ENCODE measurements at regions of chr11 and their contacts with region 1.

Region 1: DNA sequence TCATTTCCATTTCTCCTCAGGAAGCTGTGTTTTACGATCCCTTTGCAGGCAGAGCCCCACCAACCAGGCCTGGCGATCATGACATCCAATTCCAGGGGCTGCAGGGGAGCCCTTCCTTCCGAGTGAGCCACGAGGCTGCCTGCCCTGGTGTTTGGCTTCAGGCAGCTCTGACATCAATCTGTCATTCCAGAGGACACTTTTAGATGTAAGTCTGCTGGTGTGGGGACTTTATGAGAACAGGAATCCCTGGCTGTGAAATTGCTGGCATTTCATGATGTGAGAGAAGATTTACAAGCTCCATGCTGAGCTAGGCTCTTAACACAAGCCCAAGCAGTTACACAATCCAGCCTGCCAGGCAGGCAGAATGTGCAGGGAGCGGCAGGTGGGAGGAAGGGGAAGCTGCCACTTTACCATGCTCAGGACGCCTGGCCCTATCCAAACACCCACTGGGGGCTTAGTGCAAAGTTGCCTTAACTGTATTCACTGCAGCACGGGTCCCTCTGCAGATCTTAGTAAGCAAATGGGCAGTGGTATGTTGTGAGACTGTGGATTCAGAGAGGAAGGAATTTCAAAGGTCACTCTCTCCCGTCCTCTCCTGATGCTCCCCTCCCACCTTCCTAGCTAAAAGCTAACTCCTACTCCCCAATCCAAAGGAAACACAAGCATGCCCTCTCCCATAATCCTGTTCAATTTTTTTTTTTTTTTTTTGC is 43.4 kb upstream of the MICAL2 start:
- DNase-seq: peak; percentile 75
- H3K4me3 ChIP-seq: peak overlapping the region; percentile 1; the same call in 1 of the 2 replicates
- H3K27ac ChIP-seq: peak overlapping the region; percentile 97
- H3K4me1 ChIP-seq: peaks cover 28% of the 10 kb centered on the region
- H3K27me3 ChIP-seq: no peaks in the 10 kb centered on the region

Region 2: DNA sequence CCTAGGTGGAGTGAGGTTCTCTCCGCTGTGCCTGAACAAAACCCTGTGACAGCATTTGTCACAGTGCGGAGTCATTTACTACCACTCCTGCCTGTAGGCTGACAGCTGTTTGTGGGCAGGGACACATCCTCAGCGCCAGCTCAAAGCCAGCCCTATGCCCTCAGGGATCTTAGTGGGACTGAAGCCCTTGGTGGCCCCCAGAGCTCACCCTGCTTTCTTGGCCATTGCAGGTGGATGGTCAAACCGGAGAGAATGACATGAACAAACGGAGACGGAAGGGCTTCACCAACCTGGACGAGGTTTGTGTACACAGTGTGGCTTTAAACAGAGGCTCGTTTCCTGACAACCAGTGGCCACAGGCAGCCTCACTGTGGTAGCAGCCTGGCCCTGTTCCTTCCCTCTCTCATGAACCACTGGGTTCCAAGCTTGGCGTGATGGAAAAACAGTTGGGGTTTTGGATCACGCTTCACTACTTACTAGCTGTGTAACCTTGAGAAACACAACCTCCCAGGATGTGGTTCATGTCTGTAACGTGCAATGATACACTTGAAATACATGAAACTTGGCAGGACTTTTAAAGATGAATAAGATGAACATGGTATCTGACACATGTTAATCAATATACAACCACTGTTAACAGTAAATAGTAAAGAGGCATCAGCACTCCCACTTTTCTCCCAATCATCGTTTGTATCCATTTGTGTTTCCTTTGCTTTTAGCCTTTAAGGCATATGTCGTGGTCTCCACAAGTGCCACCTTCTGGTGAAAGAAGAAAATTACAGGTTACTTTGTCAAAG is 169.2 kb after region 1 on chr11:
- in situ Hi-C with region 1: loop called (anchors 25 kb)
- DNase-seq: peak; percentile 76
- H3K4me3 ChIP-seq: no peak overlapping the region
- H3K27ac ChIP-seq: peak overlapping the region; percentile 96
- H3K4me1 ChIP-seq: peaks cover 34% of the 10 kb centered on the region
- H3K27me3 ChIP-seq: no peaks in the 10 kb centered on the region

Region 3: GRCh38 chr11:13140028-13140870 is 1073.3 kb after region 1 on chr11:
- in situ Hi-C with region 1: no loop called
- DNase-seq: peak; percentile 60
- H3K4me3 ChIP-seq: no peak overlapping the region
- H3K27ac ChIP-seq: no peak overlapping the region; the same call in 1 of the 2 replicates
- H3K4me1 ChIP-seq: peaks cover 41% of the 10 kb centered on the region
- H3K27me3 ChIP-seq: no peaks in the 10 kb centered on the region

Measured in GM23248 (cell line).